ENCODE measurements at regions of chr3 and their contacts with region 1.

Region 1: GRCh38 chr3:73502609-73503583 is 121.8 kb downstream of the PDZRN3 start:
- DNase-seq: peak; percentile 71
- CTCF ChIP-seq: peak; percentile 78

Region 2: DNA sequence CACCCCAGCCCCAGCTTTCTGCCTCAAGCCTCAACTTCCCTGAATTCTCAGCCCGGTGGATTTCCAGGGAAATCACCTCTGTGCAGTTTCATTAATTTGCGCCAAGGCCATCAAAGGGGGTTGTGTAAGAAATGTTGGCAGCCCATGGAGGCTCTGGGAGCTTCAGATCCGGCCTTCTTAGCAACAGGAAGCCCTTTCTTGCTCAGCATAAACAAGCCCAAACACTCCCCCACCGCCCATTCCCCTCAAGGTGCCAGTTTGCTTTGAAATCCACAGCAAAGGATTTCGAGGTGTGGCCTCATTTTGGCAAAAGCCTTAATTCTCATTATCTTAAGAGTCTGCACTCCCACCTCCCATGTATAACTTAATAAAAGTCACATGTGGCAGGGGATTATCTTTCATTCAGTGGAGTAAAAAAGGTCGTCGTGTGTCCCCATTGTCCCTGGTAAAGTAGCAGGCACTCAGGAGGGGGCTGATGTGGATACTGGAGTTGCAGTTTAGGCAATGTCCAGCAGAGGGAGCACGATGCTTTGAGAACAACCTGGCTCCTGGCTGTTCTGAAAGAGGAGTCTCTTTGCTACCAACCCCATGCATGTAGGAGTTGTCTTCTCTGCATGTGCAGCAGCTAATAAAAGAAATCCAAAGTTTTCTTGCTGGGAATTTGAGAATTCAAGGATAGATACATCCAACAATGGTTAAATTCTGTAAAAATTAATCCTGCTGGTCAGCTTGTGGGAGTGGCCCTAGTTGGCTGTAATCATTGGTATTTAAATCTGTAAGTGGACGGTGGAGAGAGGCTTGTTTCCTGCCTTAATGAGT is 401.9 kb before region 1 on chr3:
- CTCF ChIA-PET with region 1: interaction called, 139 read pairs
- POLR2A ChIA-PET with region 1: no interaction called
- DNase-seq: peak; percentile 88
- CTCF ChIP-seq: peak; percentile 90

Region 3: DNA sequence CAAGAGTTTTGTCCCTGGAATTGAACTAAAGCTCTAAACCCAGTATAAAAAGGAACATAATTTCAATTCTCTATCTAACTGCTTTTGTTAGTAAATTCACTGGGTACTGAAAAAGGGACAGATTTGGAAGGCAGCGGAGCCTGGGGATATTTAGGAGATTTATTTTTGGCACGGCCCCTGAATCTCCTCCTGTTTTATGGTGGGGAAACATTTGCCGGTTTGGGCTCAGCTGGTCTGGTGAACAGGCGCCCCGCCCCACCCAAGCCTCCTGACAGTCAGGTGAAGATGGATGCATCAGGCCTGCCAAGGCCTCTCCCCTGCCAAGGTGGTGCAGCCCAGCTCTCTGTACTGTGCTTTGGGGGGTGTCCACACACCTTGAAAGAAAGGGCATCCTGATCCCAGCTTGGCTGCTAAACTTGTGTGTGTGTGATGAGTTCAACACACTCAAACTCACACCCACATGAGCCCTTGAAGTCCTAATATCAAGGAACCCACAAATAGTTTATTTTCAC is 395.2 kb before region 1 on chr3:
- CTCF ChIA-PET with region 1: interaction called, 139 read pairs
- POLR2A ChIA-PET with region 1: no interaction called
- DNase-seq: no peak
- CTCF ChIP-seq: no peak

Region 4: GRCh38 chr3:73448761-73449301 is 54.1 kb before region 1 on chr3:
- CTCF ChIA-PET with region 1: interaction called, 81 read pairs
- POLR2A ChIA-PET with region 1: no interaction called
- DNase-seq: peak; percentile 49
- CTCF ChIP-seq: no peak

Region 5: GRCh38 chr3:73473578-73474416 is 29.1 kb before region 1 on chr3:
- CTCF ChIA-PET with region 1: interaction called, 12 read pairs
- POLR2A ChIA-PET with region 1: no interaction called
- DNase-seq: no peak
- CTCF ChIP-seq: no peak

Region 6: DNA sequence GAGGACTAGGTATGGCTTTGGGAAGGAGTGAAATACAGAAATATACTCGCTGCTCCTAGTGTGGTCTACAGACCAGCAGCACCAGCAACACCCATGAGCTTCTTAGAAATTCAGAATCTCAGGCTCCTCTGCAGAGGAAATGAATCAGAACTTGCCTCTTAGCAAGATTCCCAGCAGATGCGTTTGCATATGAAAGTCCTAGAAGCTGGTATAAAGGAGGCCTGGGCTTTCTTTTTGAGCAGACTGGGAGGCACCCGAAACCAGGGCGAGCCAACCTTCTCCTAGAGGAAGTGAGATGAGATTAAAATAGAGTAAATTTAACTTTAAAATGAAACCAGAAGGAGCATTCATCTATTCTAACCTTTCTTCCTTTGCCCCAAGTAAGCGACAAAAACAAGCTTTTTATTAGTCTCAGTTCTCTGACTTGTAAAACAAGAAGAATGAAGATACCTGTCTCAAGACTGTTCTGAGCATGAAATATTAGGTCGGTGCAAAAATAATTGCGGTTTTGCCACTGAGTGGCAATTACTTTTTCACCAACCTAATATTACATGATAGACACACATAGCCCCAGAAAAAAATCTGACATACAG is 18.1 kb before region 1 on chr3:
- CTCF ChIA-PET with region 1: interaction called, 43 read pairs
- POLR2A ChIA-PET with region 1: no interaction called
- DNase-seq: no peak
- CTCF ChIP-seq: no peak

Region 7: GRCh38 chr3:73490453-73491286 is 12.2 kb before region 1 on chr3:
- CTCF ChIA-PET with region 1: interaction called, 43 read pairs
- POLR2A ChIA-PET with region 1: no interaction called
- DNase-seq: no peak
- CTCF ChIP-seq: no peak

Region 8: GRCh38 chr3:73557986-73558726 is 55.3 kb after region 1 on chr3:
- CTCF ChIA-PET with region 1: no interaction called
- POLR2A ChIA-PET with region 1: no interaction called
- DNase-seq: no peak
- CTCF ChIP-seq: no peak

Measured in GM10248 (cell line).